ENCODE measurements at regions of chr2 and their contacts with region 1.

Region 1: GRCh38 chr2:218876562-218877219 is 4.0 kb upstream of the WNT10A start:
- DNase-seq: peak; percentile 62 to 72
- ATAC-seq: peak; percentile 33 to 67; a peak in 5 of 6 replicates
- H3K4me3 ChIP-seq: no peak overlapping the region
- H3K27ac ChIP-seq: no peak overlapping the region
- H3K4me1 ChIP-seq: peaks cover 12% of the 10 kb centered on the region; the same call in 1 of the 3 replicates
- CTCF ChIP-seq: peak; percentile 85
- EP300 ChIP-seq: no peak
- POLR2A ChIP-seq: no peak
- RAD21 ChIP-seq: peak; percentile 75 to 90

Region 2: GRCh38 chr2:218860950-218861381 is 15.7 kb before region 1 on chr2:
- CTCF ChIA-PET with region 1: interaction called, 70 read pairs
- POLR2A ChIA-PET with region 1: no interaction called
- DNase-seq: no peak
- ATAC-seq: peak in 1 of 2 experiments; percentile 13; a peak in 1 of 6 replicates
- H3K4me3 ChIP-seq: peak overlapping the region; percentile 64; the same call in 1 of the 3 replicates
- H3K27ac ChIP-seq: no peak overlapping the region
- H3K4me1 ChIP-seq: peaks cover 35% of the 10 kb centered on the region
- CTCF ChIP-seq: no peak
- EP300 ChIP-seq: no peak
- POLR2A ChIP-seq: no peak
- RAD21 ChIP-seq: no peak

Region 3: GRCh38 chr2:218892693-218893348 is 16.1 kb after region 1 on chr2:
- CTCF ChIA-PET with region 1: interaction called, 665 read pairs
- POLR2A ChIA-PET with region 1: no interaction called
- DNase-seq: peak; percentile 63 to 64
- ATAC-seq: peak; percentile 64 to 78
- H3K4me3 ChIP-seq: peak overlapping the region; percentile 33
- H3K27ac ChIP-seq: peak overlapping the region; percentile 66 to 81; a peak in 5 of 6 replicates
- H3K4me1 ChIP-seq: peaks cover 33% of the 10 kb centered on the region
- CTCF ChIP-seq: peak; percentile 66
- EP300 ChIP-seq: no peak
- POLR2A ChIP-seq: no peak
- RAD21 ChIP-seq: no peak

Region 4: GRCh38 chr2:218908721-218909619 is 32.3 kb after region 1 on chr2:
- CTCF ChIA-PET with region 1: interaction called, 665 read pairs
- POLR2A ChIA-PET with region 1: no interaction called
- DNase-seq: peak; percentile 91 to 97
- ATAC-seq: peak; percentile 97 to 98
- H3K4me3 ChIP-seq: peak overlapping the region; percentile 51
- H3K27ac ChIP-seq: peak overlapping the region; percentile 67 to 88
- H3K4me1 ChIP-seq: 0 out of 3 replicates have a peak, but pooled peaks cover 3% of the 10 kb centered on the region
- CTCF ChIP-seq: no peak
- EP300 ChIP-seq: no peak
- POLR2A ChIP-seq: peak; percentile 86
- RAD21 ChIP-seq: no peak

Region 5: DNA sequence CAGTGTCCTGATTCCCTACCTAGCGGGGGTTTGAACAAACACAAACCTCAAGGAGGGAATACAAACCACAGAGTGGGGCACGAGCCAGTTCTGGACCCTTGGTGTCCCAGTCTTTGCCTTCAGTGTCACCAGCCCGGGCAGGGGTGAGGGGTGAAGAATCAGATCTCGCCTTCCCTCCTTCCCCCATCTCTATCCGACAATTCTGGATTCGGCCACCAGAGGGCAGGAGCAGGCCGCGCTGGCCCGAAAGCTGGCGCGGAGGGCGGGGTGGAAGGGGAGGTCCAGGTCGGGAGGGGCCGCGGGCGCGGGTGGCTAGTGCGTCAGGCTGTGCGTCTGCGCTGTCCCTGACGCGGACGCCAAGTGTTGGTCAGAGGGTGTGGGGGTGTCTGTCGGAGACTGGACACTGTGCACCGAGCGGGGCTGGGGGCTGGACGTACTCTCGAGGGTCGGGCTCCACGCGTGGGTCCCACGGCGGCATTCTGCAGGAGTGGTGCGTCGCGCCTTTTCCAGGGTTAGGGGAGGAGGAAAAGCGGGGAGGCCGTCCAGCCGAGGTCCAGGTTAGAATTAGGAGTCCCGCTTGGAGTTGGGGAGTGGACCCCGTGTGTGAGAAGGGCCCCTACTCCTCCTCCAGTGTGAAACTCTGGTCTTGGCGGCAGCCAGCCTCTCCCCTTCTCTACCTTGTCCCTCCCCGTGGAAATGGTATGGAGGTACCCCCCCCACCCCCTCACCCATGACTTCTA is 119.5 kb after region 1 on chr2:
- CTCF ChIA-PET with region 1: interaction called, 15 read pairs
- POLR2A ChIA-PET with region 1: no interaction called
- DNase-seq: peak; percentile 87
- ATAC-seq: peak; percentile 78 to 93
- H3K4me3 ChIP-seq: peak overlapping the region; percentile 49
- H3K27ac ChIP-seq: peak overlapping the region; percentile 79 to 84
- H3K4me1 ChIP-seq: peaks cover 10% of the 10 kb centered on the region
- CTCF ChIP-seq: peak; percentile 87
- EP300 ChIP-seq: no peak
- POLR2A ChIP-seq: peak; percentile 84
- RAD21 ChIP-seq: peak; percentile 74 to 80

Region 6: DNA sequence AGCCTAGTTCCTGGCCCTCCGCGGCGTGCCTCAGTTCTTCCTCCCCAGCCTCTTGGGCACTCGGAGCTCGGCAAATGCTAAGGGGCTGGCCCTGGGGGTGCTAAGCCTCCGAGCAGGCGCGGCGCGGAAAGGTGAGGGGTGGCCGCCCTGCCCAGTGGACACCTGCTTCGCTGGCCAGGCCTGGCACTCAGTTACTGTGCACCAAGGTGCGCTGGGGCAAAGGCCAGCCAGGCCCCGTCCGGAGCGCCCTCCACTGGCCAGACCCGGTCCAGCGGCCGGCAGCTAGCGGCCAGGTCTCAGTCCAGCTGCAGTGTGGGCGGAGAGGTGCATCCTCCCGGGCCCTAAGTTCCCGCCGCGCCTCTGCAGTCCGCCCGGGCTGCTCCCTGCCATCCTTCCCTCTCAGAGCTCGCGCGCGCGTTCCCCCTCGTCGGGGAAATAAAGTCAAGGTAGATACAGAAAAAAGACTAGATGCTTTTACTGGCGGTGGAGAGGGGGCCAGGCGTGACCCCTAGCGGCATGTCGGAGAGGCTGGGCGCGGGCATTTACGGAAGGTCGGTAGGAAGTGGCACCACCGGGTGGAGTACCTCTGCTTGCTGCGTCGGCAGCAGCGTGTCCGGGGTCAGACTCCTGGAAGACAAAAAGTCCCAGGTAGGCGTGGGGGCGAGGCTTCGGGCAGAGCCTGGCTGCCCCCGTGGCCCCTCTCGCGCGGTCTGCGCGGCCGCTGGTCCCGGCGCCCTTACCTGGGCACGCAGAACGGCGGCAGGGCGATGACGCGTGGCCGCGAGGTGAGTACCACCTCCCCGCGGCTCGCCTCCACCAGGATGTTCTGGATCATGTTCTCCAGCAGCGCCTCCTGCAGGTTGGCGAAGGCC is 125.9 kb after region 1 on chr2:
- CTCF ChIA-PET with region 1: interaction called, 13 read pairs
- POLR2A ChIA-PET with region 1: no interaction called
- DNase-seq: peak; percentile 82 to 93
- ATAC-seq: peak; percentile 84 to 93
- H3K4me3 ChIP-seq: peak overlapping the region; percentile 59
- H3K27ac ChIP-seq: peak overlapping the region; percentile 64 to 83
- H3K4me1 ChIP-seq: peaks cover 7% of the 10 kb centered on the region
- CTCF ChIP-seq: peak; percentile 68
- EP300 ChIP-seq: no peak
- POLR2A ChIP-seq: peak; percentile 52
- RAD21 ChIP-seq: 0 out of 5 replicates have a peak, but pooled peaks have one; percentile 17 to 19

Region 7: GRCh38 chr2:219726916-219727315 is 850.2 kb after region 1 on chr2:
- CTCF ChIA-PET with region 1: no interaction called
- POLR2A ChIA-PET with region 1: no interaction called
- DNase-seq: no peak
- ATAC-seq: peak in 1 of 2 experiments; percentile 29; a peak in 1 of 6 replicates
- H3K4me3 ChIP-seq: no peak overlapping the region
- H3K27ac ChIP-seq: no peak overlapping the region
- H3K4me1 ChIP-seq: no peaks in the 10 kb centered on the region
- CTCF ChIP-seq: no peak
- EP300 ChIP-seq: no peak
- POLR2A ChIP-seq: no peak
- RAD21 ChIP-seq: no peak